Activated T-helper 2 cell treated with anti-CD3 and anti-CD28 coated beads, Interferon-gamma antibody, Interleukin-2, Interleukin-4, amounts not matched to agents 10 μg/mL and 5 μg/mL and 100 μg/mL, durations not matched to agents 14 hours and 24 hours and 36 hours (primary cell): ENCODE measurements at regions of chr6 and their contacts with region 1.

Region 1: DNA sequence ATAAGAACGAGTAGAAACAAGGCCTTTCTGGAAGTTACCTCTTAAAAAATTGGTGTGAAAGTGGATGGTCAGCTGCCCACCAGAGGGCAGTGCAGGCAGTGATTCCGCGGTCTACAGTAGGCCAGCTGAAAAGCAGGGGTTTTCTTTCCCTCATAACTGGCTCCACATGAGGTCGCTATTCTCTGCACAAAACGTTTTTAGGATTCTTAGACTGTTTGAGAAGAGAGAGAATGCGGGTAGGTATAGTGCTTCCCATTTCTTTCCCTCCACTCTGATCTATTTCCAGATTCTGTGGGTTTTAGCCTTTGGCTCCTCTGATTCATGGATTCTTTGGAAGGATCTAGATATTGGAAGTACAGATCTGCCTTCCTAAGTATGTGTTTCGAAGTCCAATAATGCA is 14.2 kb downstream of the FIG4 start:
- DNase-seq: peak; percentile 65
- H3K4me3 Mint-ChIP-seq: no peak overlapping the region
- H3K27ac Mint-ChIP-seq: no peak overlapping the region
- H3K4me1 Mint-ChIP-seq: peaks cover 2% of the 10 kb centered on the region
- H3K27me3 Mint-ChIP-seq: peaks cover 2% of the 10 kb centered on the region

Region 2: GRCh38 chr6:110389689-110390382 is 684.6 kb after region 1 on chr6:
- intact Hi-C with region 1: loop called (anchors 1 kb)
- DNase-seq: no peak
- H3K4me3 Mint-ChIP-seq: no peak overlapping the region
- H3K27ac Mint-ChIP-seq: no peak overlapping the region
- H3K4me1 Mint-ChIP-seq: peaks cover 17% of the 10 kb centered on the region
- H3K27me3 Mint-ChIP-seq: no peaks in the 10 kb centered on the region